ENCODE measurements at regions of chr7 and their contacts with region 1.

Region 1: GRCh38 chr7:149624419-149625339 is 127.1 kb upstream of the ZNF746 start:
- DNase-seq: peak; percentile 79 to 97 (median 88)
- ATAC-seq: peak; percentile 88
- H3K4me3 ChIP-seq: peak overlapping the region; percentile 83
- H3K4me3 Mint-ChIP-seq: peak overlapping the region; percentile 98
- H3K27ac ChIP-seq: peak overlapping the region in 1 of 2 donors; percentile 41
- H3K27ac Mint-ChIP-seq: peak overlapping the region; percentile 70
- H3K4me1 ChIP-seq: peaks cover 47% of the 10 kb centered on the region
- H3K4me1 Mint-ChIP-seq: peaks cover 40% of the 10 kb centered on the region
- H3K27me3 ChIP-seq: no peaks in the 10 kb centered on the region
- H3K27me3 Mint-ChIP-seq: peaks cover 3% of the 10 kb centered on the region
- CTCF ChIP-seq: peak; percentile 88

Region 2: DNA sequence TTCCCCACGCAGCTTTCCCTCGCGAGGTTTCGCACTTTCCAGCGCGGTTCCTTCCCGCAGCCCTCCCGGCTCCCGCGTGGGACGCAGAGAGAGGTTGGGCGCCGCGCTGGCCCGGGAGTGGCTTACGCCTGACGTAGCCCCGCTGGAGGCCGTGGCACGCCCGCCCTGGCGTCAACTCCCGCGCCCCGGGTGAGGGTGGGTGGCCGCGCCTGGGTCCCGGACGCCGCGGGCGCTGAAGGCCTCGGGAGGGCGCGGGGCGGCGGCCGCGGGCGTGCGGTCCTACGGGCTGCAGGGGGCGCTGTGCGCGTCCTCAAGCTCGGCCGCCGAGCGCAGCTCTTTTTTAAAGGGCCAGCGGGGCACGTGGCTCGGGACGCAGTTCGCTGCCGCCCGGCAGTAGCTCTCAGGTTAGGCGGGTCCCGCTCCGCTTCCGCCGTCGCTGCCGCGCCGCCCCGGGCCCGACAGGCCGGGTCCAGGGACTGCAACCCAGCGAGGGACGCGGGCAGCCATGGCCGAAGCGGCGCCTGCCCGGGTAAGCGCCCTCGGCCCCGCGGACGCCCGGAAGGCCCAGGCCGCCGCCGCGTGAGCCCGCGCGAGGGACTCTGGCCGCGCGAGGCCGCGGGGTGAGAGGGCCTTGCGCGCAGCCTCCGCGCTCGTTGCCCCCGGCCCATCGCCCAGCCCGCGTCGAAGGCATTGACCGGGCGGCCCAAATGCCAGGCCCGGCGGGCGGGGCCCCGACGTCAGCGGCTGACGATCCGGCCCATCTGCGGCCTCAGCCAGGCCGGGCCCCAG is 362.7 kb before region 1 on chr7 and contains the start of gene ZNF783:
- CTCF ChIA-PET with region 1: interaction called, 7 read pairs
- POLR2A ChIA-PET with region 1: interaction called, 6 read pairs
- intact Hi-C with region 1: loop called in 1 of 2 experiments (anchors 5 kb)
- DNase-seq: peak; percentile 75 to 97 (median 83)
- ATAC-seq: peak; percentile 91
- H3K4me3 ChIP-seq: peak within 1 kb of the TSS; percentile 56
- H3K4me3 Mint-ChIP-seq: peak within 1 kb of the TSS; percentile 89
- H3K27ac ChIP-seq: peak within 1 kb of the TSS; percentile 41 to 42
- H3K27ac Mint-ChIP-seq: peak within 1 kb of the TSS; percentile 80
- H3K4me1 ChIP-seq: peaks cover 28% of the 10 kb centered on the region
- H3K4me1 Mint-ChIP-seq: peaks cover 38% of the 10 kb centered on the region
- H3K27me3 ChIP-seq: no peaks in the 10 kb centered on the region
- H3K27me3 Mint-ChIP-seq: no peaks in the 10 kb centered on the region
- CTCF ChIP-seq: peak; percentile 57
- total RNA-seq, gene ZNF783: 27.6 to 29.0 TPM

Region 3: DNA sequence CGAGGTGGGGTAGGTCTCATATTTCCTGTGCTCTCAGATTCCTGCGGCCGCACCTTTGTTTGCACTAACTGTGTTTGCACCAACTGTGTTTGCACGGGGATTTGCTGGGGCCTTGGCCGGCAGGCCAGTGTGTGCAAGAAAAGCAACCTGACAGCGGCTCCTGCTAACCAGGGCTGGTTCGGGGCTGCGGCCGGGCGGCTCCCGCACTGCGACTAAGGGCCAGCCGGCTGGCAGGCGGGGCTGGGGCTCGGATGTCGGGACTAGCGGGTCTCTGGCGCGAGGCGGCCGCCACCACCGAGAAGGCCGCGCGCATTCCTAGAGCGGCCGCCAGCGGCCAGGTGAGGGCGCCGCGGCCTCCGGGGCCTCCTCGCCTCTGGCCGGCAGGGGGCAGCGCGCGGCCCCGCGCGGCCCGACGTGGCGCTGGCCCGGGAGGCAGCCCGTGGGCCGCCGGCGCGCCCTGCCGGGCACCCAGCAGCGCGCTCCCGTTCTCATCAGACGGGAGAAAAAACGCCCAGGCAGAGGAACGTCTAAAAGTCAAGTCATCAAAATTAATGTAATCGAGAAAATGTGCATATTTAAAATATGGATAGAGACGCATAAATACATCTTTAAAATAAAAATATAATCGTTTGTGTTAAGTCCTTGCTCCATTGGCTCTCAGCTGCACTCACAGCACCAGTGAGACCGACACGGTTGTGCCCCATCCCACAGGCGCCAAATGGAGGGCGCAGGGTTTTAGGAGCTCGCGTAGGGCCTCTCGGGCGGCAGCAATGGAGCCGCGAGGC is 202.4 kb before region 1 on chr7:
- CTCF ChIA-PET with region 1: interaction called, 4 read pairs
- POLR2A ChIA-PET with region 1: interaction called, 3 read pairs
- intact Hi-C with region 1: loop called in 1 of 2 experiments (anchors 2 kb)
- DNase-seq: peak; percentile 33 to 93 (median 69)
- ATAC-seq: peak; percentile 92
- H3K4me3 ChIP-seq: peak overlapping the region; percentile 75
- H3K4me3 Mint-ChIP-seq: peak overlapping the region; percentile 70
- H3K27ac ChIP-seq: peak overlapping the region; percentile 16 to 76
- H3K27ac Mint-ChIP-seq: peak overlapping the region; percentile 68
- H3K4me1 ChIP-seq: peaks cover 17% of the 10 kb centered on the region
- H3K4me1 Mint-ChIP-seq: no peaks in the 10 kb centered on the region
- H3K27me3 ChIP-seq: no peaks in the 10 kb centered on the region
- H3K27me3 Mint-ChIP-seq: no peaks in the 10 kb centered on the region
- CTCF ChIP-seq: peak; percentile 29

Region 4: GRCh38 chr7:149460493-149461277 is 164.0 kb before region 1 on chr7 and contains the start of gene ZNF777:
- CTCF ChIA-PET with region 1: interaction called, 3 read pairs
- POLR2A ChIA-PET with region 1: interaction called, 6 read pairs
- intact Hi-C with region 1: loop called in 1 of 2 experiments (anchors 2 kb)
- DNase-seq: peak; percentile 70 to 92 (median 78)
- ATAC-seq: peak; percentile 99
- H3K4me3 ChIP-seq: peak within 1 kb of the TSS; percentile 74
- H3K4me3 Mint-ChIP-seq: peak within 1 kb of the TSS; percentile 92
- H3K27ac ChIP-seq: peak within 1 kb of the TSS in 1 of 2 donors; percentile 52
- H3K27ac Mint-ChIP-seq: peak within 1 kb of the TSS; percentile 70
- H3K4me1 ChIP-seq: peaks cover 25% of the 10 kb centered on the region
- H3K4me1 Mint-ChIP-seq: peaks cover 33% of the 10 kb centered on the region
- H3K27me3 ChIP-seq: peaks cover 0 to 5% of the 10 kb centered on the region in 2 experiments
- H3K27me3 Mint-ChIP-seq: peaks cover 15% of the 10 kb centered on the region
- CTCF ChIP-seq: peak; percentile 49
- total RNA-seq, gene ZNF777: 14.5 to 14.8 TPM

Region 5: GRCh38 chr7:149573519-149573918 is 51.2 kb before region 1 on chr7:
- CTCF ChIA-PET with region 1: no interaction called
- POLR2A ChIA-PET with region 1: no interaction called
- intact Hi-C with region 1: no loop called
- DNase-seq: no peak
- ATAC-seq: no peak
- H3K4me3 ChIP-seq: no peak overlapping the region
- H3K4me3 Mint-ChIP-seq: no peak overlapping the region
- H3K27ac ChIP-seq: no peak overlapping the region
- H3K27ac Mint-ChIP-seq: no peak overlapping the region
- H3K4me1 ChIP-seq: no peaks in the 10 kb centered on the region
- H3K4me1 Mint-ChIP-seq: no peaks in the 10 kb centered on the region
- H3K27me3 ChIP-seq: no peaks in the 10 kb centered on the region
- H3K27me3 Mint-ChIP-seq: no peaks in the 10 kb centered on the region
- CTCF ChIP-seq: no peak

Region 6: DNA sequence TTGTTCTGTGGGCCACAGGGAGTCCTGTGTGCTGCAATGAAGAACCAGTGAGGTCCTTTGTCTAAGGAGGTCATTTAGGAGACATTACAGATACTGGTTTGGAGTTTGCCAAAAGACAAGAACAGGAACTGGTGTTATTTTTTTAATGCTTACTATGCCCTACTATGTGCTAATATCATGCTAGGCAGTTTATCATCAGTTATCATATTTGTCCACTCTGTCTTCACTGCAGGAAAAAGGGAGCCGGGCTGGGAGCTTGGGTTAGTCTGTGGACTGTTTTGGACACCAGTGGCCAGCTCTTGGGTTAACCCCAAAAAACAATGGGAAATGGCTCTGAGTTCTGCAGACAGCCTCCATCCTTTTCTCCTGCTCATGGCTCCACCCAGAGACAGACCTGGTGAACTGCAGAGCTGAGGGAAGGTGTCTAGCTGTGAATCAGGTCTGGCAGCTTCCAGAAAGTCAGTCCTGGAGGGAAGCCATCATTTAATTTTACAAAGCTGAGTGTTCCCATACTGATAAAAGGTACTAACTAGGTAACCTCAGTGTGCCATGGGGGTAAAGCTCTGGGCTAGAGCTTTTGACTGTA is 25.9 kb before region 1 on chr7:
- CTCF ChIA-PET with region 1: interaction called, 8 read pairs
- POLR2A ChIA-PET with region 1: interaction called, 11 read pairs
- intact Hi-C with region 1: loop called in 1 of 2 experiments (anchors 2 kb)
- DNase-seq: peak in 2 of 14 experiments; percentile 31 to 34
- ATAC-seq: no peak
- H3K4me3 ChIP-seq: no peak overlapping the region
- H3K4me3 Mint-ChIP-seq: no peak overlapping the region
- H3K27ac ChIP-seq: no peak overlapping the region
- H3K27ac Mint-ChIP-seq: peak overlapping the region; percentile 76
- H3K4me1 ChIP-seq: peaks cover 19% of the 10 kb centered on the region
- H3K4me1 Mint-ChIP-seq: peaks cover 29% of the 10 kb centered on the region
- H3K27me3 ChIP-seq: no peaks in the 10 kb centered on the region
- H3K27me3 Mint-ChIP-seq: no peaks in the 10 kb centered on the region
- CTCF ChIP-seq: no peak

Region 7: GRCh38 chr7:149771721-149772240 is 147.1 kb after region 1 on chr7:
- CTCF ChIA-PET with region 1: no interaction called
- POLR2A ChIA-PET with region 1: no interaction called
- intact Hi-C with region 1: loop called in 1 of 2 experiments (anchors 5 kb)
- DNase-seq: peak; percentile 73 to 93 (median 86)
- ATAC-seq: peak; percentile 87
- H3K4me3 ChIP-seq: peak overlapping the region; percentile 67
- H3K4me3 Mint-ChIP-seq: peak overlapping the region; percentile 84
- H3K27ac ChIP-seq: no peak overlapping the region
- H3K27ac Mint-ChIP-seq: no peak overlapping the region
- H3K4me1 ChIP-seq: peaks cover 31% of the 10 kb centered on the region
- H3K4me1 Mint-ChIP-seq: peaks cover 20% of the 10 kb centered on the region
- H3K27me3 ChIP-seq: no peaks in the 10 kb centered on the region
- H3K27me3 Mint-ChIP-seq: no peaks in the 10 kb centered on the region
- CTCF ChIP-seq: no peak

Region 8: DNA sequence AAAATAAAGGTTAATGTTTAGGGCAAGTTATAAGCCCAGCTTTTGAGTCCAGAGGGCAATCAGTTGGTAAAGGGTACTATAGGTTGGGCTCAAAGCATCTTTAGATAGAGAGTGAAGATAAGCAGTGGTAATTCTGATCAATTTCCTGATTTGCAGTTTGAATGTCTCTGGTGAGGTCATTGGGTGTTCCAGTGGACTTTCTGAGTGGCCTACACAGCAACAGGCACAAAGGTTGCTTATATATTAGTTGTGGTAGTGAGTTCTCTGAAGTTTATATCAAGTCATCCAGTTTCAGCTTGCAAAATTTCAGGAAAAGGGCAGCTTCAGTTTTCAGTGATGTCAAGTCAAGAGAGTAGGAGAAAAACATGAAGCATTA is 1141.6 kb after region 1 on chr7:
- CTCF ChIA-PET with region 1: no interaction called
- POLR2A ChIA-PET with region 1: no interaction called
- intact Hi-C with region 1: no loop called
- DNase-seq: no peak
- ATAC-seq: no peak
- H3K4me3 ChIP-seq: no peak overlapping the region
- H3K4me3 Mint-ChIP-seq: no peak overlapping the region
- H3K27ac ChIP-seq: no peak overlapping the region
- H3K27ac Mint-ChIP-seq: no peak overlapping the region
- H3K4me1 ChIP-seq: no peaks in the 10 kb centered on the region
- H3K4me1 Mint-ChIP-seq: no peaks in the 10 kb centered on the region
- H3K27me3 ChIP-seq: no peaks in the 10 kb centered on the region
- H3K27me3 Mint-ChIP-seq: no peaks in the 10 kb centered on the region
- CTCF ChIP-seq: no peak

Region 9: GRCh38 chr7:151232091-151232916 is 1607.6 kb after region 1 on chr7 and contains the start of gene CHPF2:
- CTCF ChIA-PET with region 1: interaction called, 3 read pairs
- POLR2A ChIA-PET with region 1: no interaction called
- intact Hi-C with region 1: loop called in 1 of 2 experiments (anchors 2 kb)
- DNase-seq: peak; percentile 73 to 93 (median 87)
- ATAC-seq: peak; percentile 82
- H3K4me3 ChIP-seq: peak within 1 kb of the TSS; percentile 95
- H3K4me3 Mint-ChIP-seq: peak within 1 kb of the TSS; percentile 99
- H3K27ac ChIP-seq: peak within 1 kb of the TSS; percentile 61 to 74
- H3K27ac Mint-ChIP-seq: peak within 1 kb of the TSS; percentile 90
- H3K4me1 ChIP-seq: peaks cover 48% of the 10 kb centered on the region
- H3K4me1 Mint-ChIP-seq: peaks cover 45% of the 10 kb centered on the region
- H3K27me3 ChIP-seq: no peaks in the 10 kb centered on the region
- H3K27me3 Mint-ChIP-seq: no peaks in the 10 kb centered on the region
- CTCF ChIP-seq: no peak
- total RNA-seq, gene CHPF2: 29.6 to 30.5 TPM